B cell (primary cell): ENCODE measurements at regions of chr12 and their contacts with region 1.

Region 1: GRCh38 chr12:68807576-68808387 is at the start of gene MDM2:
- DNase-seq: peak; percentile 98
- ATAC-seq: peak; percentile 90
- H3K4me3 ChIP-seq: peak within 1 kb of the TSS; percentile 65 to 95 (median 84)
- H3K4me3 Mint-ChIP-seq: peak within 1 kb of the TSS; percentile 97
- H3K27ac ChIP-seq: peak within 1 kb of the TSS; percentile 92 to 95
- H3K27ac Mint-ChIP-seq: peak within 1 kb of the TSS; percentile 99
- H3K4me1 ChIP-seq: peaks cover 11% of the 10 kb centered on the region in 2 donors
- H3K4me1 Mint-ChIP-seq: peaks cover 17% of the 10 kb centered on the region
- H3K27me3 ChIP-seq: no peaks in the 10 kb centered on the region
- H3K27me3 Mint-ChIP-seq: no peaks in the 10 kb centered on the region
- CTCF ChIP-seq: peak; percentile 76
- total RNA-seq, gene MDM2: 78.7 and 87.0 TPM in 2 replicates

Region 2: GRCh38 chr12:67648521-67649260 is 1159.1 kb before region 1 on chr12 and contains the start of gene DYRK2:
- CTCF ChIA-PET with region 1: no interaction called
- POLR2A ChIA-PET with region 1: no interaction called
- intact Hi-C with region 1: loop called (anchors 5 kb)
- DNase-seq: peak; percentile 88
- ATAC-seq: peak; percentile 64
- H3K4me3 ChIP-seq: peak within 1 kb of the TSS; percentile 49 to 95 (median 85)
- H3K4me3 Mint-ChIP-seq: peak within 1 kb of the TSS; percentile 98
- H3K27ac ChIP-seq: peak within 1 kb of the TSS; percentile 42 to 77
- H3K27ac Mint-ChIP-seq: peak within 1 kb of the TSS; percentile 95
- H3K4me1 ChIP-seq: peaks cover 25 to 35% of the 10 kb centered on the region in 2 donors
- H3K4me1 Mint-ChIP-seq: peaks cover 39% of the 10 kb centered on the region
- H3K27me3 ChIP-seq: no peaks in the 10 kb centered on the region
- H3K27me3 Mint-ChIP-seq: no peaks in the 10 kb centered on the region
- CTCF ChIP-seq: peak; percentile 15
- total RNA-seq, gene DYRK2: 75.3 and 77.9 TPM in 2 replicates

Region 3: DNA sequence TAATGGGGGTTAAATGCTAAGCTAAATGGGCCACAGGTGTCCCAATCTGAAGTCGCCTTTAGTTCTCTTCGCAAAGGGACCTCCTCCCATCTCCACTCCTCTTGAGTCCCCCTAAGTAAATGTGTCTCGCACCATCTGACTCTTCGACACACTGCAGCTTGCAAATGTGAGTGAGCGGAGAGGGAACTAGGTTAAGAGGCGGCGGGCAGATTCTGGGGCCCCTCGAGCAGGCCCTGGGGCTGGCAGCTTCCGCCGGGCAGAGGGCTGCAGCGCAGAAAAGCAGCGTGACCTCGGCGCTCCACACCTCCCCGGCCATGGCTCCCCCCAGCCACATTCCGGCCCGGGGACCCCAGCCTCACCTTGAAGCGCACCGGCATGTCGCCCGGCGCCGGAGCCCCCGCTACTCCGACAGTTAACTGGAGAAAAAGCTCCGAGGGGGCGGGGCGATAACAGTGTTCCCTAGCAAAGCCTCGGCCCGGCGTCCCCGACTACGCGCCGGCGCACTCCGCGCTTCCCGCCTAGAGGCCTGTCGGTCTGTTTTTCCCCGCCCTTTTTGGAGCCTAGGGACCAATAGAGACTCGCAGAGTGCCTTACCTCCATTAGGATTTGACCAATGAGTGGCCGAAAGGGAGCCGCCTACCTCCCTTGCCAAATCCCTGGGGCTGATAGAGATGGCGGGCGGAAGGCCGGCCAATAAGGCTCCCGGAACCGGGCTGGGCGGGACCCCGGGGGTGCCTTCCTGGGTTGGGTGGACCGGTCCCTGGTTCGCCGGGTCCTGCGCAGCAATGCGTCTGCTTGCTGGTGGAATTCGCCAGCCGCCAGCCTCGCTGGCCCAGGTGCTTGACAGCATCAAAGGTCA is 475.7 kb before region 1 on chr12 and contains the start of gene MDM1:
- CTCF ChIA-PET with region 1: no interaction called
- POLR2A ChIA-PET with region 1: no interaction called
- intact Hi-C with region 1: loop called (anchors 1 kb)
- DNase-seq: peak; percentile 97
- ATAC-seq: peak; percentile 97
- H3K4me3 ChIP-seq: peak within 1 kb of the TSS; percentile 79 to 85 (median 82)
- H3K4me3 Mint-ChIP-seq: peak within 1 kb of the TSS; percentile 94
- H3K27ac ChIP-seq: peak within 1 kb of the TSS; percentile 55 to 78
- H3K27ac Mint-ChIP-seq: peak within 1 kb of the TSS; percentile 90
- H3K4me1 ChIP-seq: peaks cover 12 to 14% of the 10 kb centered on the region in 2 donors
- H3K4me1 Mint-ChIP-seq: peaks cover 40% of the 10 kb centered on the region
- H3K27me3 ChIP-seq: no peaks in the 10 kb centered on the region
- H3K27me3 Mint-ChIP-seq: no peaks in the 10 kb centered on the region
- CTCF ChIP-seq: no peak
- total RNA-seq, gene MDM1: 38.3 and 38.9 TPM in 2 replicates

Region 4: GRCh38 chr12:68686595-68687521 is 120.9 kb before region 1 on chr12 and contains the start of gene NUP107:
- CTCF ChIA-PET with region 1: no interaction called
- POLR2A ChIA-PET with region 1: interaction called, 3 read pairs
- intact Hi-C with region 1: loop called (anchors 1 kb)
- DNase-seq: peak; percentile 98
- ATAC-seq: peak; percentile 95
- H3K4me3 ChIP-seq: peak within 1 kb of the TSS; percentile 71 to 100 (median 81)
- H3K4me3 Mint-ChIP-seq: peak within 1 kb of the TSS; percentile 96
- H3K27ac ChIP-seq: peak within 1 kb of the TSS; percentile 70 to 77
- H3K27ac Mint-ChIP-seq: peak within 1 kb of the TSS; percentile 98
- H3K4me1 ChIP-seq: peaks cover 17 to 20% of the 10 kb centered on the region in 2 donors
- H3K4me1 Mint-ChIP-seq: peaks cover 28% of the 10 kb centered on the region
- H3K27me3 ChIP-seq: no peaks in the 10 kb centered on the region
- H3K27me3 Mint-ChIP-seq: no peaks in the 10 kb centered on the region
- CTCF ChIP-seq: no peak
- total RNA-seq, gene NUP107: 77.3 and 88.9 TPM in 2 replicates

Region 5: GRCh38 chr12:68780731-68781130 is 27.1 kb before region 1 on chr12:
- CTCF ChIA-PET with region 1: no interaction called
- POLR2A ChIA-PET with region 1: no interaction called
- intact Hi-C with region 1: no loop called
- DNase-seq: no peak
- ATAC-seq: no peak
- H3K4me3 ChIP-seq: no peak overlapping the region
- H3K4me3 Mint-ChIP-seq: no peak overlapping the region
- H3K27ac ChIP-seq: no peak overlapping the region
- H3K27ac Mint-ChIP-seq: no peak overlapping the region
- H3K4me1 ChIP-seq: no peaks in the 10 kb centered on the region
- H3K4me1 Mint-ChIP-seq: peaks cover 1% of the 10 kb centered on the region
- H3K27me3 ChIP-seq: no peaks in the 10 kb centered on the region
- H3K27me3 Mint-ChIP-seq: no peaks in the 10 kb centered on the region
- CTCF ChIP-seq: no peak

Region 6: GRCh38 chr12:68792952-68793835 is 14.6 kb before region 1 on chr12:
- CTCF ChIA-PET with region 1: no interaction called
- POLR2A ChIA-PET with region 1: no interaction called
- intact Hi-C with region 1: loop called (anchors 2 kb)
- DNase-seq: peak; percentile 64
- ATAC-seq: peak; percentile 86
- H3K4me3 ChIP-seq: no peak overlapping the region
- H3K4me3 Mint-ChIP-seq: no peak overlapping the region
- H3K27ac ChIP-seq: no peak overlapping the region
- H3K27ac Mint-ChIP-seq: no peak overlapping the region
- H3K4me1 ChIP-seq: no peaks in the 10 kb centered on the region
- H3K4me1 Mint-ChIP-seq: peaks cover 5% of the 10 kb centered on the region
- H3K27me3 ChIP-seq: no peaks in the 10 kb centered on the region
- H3K27me3 Mint-ChIP-seq: no peaks in the 10 kb centered on the region
- CTCF ChIP-seq: no peak

Region 7: DNA sequence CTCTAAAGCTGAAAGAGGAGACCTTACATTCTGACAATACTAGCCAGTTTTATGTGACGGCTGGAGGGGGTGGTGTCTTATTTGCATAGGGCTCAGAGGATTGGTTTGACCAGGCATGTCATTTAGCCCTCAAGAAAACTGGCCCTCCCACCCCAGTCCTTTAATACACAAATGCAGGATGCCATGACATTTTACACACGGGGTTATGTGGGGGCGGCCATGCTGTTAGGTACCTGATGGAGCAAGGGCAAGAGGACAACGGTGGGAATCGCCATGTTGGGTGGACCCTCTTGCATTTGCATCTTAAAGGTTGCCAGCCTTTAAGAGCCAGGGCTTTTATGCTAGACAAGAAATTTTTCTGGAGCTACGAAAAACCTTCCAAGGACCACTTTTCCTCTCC is 23.5 kb after region 1 on chr12:
- CTCF ChIA-PET with region 1: interaction called, 16 read pairs
- POLR2A ChIA-PET with region 1: no interaction called
- intact Hi-C with region 1: loop called (anchors 1 kb)
- DNase-seq: no peak
- ATAC-seq: no peak
- H3K4me3 ChIP-seq: no peak overlapping the region
- H3K4me3 Mint-ChIP-seq: no peak overlapping the region
- H3K27ac ChIP-seq: no peak overlapping the region
- H3K27ac Mint-ChIP-seq: no peak overlapping the region
- H3K4me1 ChIP-seq: no peaks in the 10 kb centered on the region
- H3K4me1 Mint-ChIP-seq: peaks cover 5% of the 10 kb centered on the region
- H3K27me3 ChIP-seq: no peaks in the 10 kb centered on the region
- H3K27me3 Mint-ChIP-seq: no peaks in the 10 kb centered on the region
- CTCF ChIP-seq: no peak

Region 8: GRCh38 chr12:70290116-70290515 is 1482.3 kb after region 1 on chr12:
- CTCF ChIA-PET with region 1: no interaction called
- POLR2A ChIA-PET with region 1: no interaction called
- intact Hi-C with region 1: no loop called
- DNase-seq: no peak
- ATAC-seq: no peak
- H3K4me3 ChIP-seq: no peak overlapping the region
- H3K4me3 Mint-ChIP-seq: no peak overlapping the region
- H3K27ac ChIP-seq: no peak overlapping the region
- H3K27ac Mint-ChIP-seq: no peak overlapping the region
- H3K4me1 ChIP-seq: peaks cover 0 to 8% of the 10 kb centered on the region in 2 donors
- H3K4me1 Mint-ChIP-seq: peaks cover 21% of the 10 kb centered on the region
- H3K27me3 ChIP-seq: no peaks in the 10 kb centered on the region
- H3K27me3 Mint-ChIP-seq: no peaks in the 10 kb centered on the region
- CTCF ChIP-seq: no peak